AG04450 (cell line): ENCODE measurements at regions of chr1 and their contacts with region 1.

Region 1: DNA sequence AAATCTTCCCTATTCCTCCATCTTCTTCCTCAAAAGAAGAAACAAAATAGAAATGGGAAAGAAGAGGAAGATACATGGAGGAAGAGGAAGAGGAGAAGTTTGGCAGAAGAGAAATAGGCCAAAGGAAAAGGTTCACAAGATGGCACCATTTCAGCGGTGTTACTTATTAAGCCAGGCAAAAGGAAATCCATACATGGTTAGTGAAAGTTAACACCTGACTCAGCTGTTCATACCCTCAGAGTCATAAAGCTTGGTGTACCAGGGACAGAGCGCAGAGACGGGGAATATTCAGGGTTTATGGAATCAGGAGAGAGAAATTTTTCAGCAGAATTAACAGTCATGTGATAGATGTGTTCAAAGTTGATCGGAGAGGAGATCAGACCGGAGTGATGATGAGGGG is 70.6 kb downstream of the COQ8A start:
- DNase-seq: no peak
- H3K4me3 ChIP-seq: no peak overlapping the region
- H3K27ac ChIP-seq: no peak overlapping the region
- H3K27me3 ChIP-seq: no peaks in the 10 kb centered on the region
- CTCF ChIP-seq: no peak

Region 2: DNA sequence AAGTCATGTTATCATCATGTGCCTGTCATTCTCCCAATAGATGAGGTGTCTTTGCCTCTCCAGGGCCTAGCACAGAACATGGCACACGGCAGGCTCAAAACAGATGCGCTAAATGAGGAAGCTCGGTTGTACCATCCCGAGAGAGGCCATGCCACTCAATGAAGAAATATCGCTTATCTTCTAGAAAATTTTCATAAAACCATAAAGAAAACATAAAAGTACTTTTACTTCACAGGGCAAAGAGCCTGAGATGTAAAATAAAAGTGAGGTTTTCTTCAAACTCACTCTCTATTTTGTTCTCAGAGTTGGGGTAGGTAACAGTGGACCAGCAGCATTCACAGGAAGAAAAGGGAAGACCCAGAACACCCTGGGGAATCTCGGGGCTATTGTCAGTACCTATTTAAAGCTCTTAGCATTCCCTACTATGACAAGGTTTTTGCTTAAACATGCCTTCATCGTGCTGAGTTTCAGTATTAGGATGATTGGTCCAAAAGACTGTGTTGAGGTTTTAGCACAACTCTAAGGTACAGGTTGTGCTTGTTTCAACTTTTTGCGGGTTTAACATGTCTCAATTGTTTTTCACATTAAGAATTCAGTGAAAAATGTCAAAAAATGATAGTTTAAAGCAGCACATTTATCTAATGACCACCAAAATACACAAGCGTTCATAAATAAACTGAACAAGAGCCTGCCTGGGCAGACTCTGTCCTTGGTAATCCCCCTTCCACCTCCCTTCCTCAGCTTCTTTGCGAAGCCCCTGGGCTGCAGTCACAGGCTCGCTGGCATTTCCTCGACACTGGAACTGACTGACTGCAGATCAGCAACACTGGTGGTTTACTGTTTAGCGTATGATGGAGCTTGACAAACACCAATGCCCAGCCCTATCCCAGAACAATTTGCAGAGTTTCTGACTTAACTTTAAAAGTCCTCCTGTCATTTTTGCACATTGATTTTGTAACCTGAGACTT is 15.0 kb before region 1 on chr1:
- CTCF ChIA-PET with region 1: no interaction called
- POLR2A ChIA-PET with region 1: no interaction called
- DNase-seq: no peak
- H3K4me3 ChIP-seq: no peak overlapping the region
- H3K27ac ChIP-seq: no peak overlapping the region
- H3K27me3 ChIP-seq: no peaks in the 10 kb centered on the region
- CTCF ChIP-seq: no peak

Region 3: DNA sequence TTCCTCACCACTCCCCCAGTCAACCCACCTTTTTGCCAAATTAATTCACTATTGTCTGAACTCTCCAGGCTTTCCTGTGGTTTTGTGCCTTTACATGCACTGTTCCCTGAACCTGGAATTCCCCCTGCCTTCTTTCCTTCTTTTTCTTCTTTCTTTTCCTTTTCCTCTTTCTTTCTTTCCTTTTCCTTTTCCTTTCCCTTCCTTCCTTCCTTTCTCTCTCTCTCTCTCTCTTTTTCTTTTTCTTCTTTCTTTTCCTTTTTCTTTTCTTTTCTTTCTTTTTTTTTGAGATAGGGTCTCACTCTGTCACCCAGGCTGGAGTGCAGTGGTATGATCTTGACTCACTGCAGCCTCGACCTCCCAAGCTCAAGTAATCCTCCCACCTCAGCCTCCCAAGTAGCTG is 364.2 kb after region 1 on chr1:
- CTCF ChIA-PET with region 1: no interaction called
- POLR2A ChIA-PET with region 1: interaction called, 11 read pairs
- DNase-seq: no peak
- H3K4me3 ChIP-seq: no peak overlapping the region
- H3K27ac ChIP-seq: no peak overlapping the region
- H3K27me3 ChIP-seq: no peaks in the 10 kb centered on the region
- CTCF ChIP-seq: no peak